Gastrocnemius medialis (tissue), 4 donors: ENCODE measurements at regions of chr6 and their contacts with region 1.

Region 1: GRCh38 chr6:31834434-31835198 is 7.1 kb downstream of the HSPA1B start:
- DNase-seq: peak; percentile 76 to 87
- ATAC-seq: peak; percentile 86 to 87
- H3K4me3 ChIP-seq: peak overlapping the region; percentile 68 to 96 (median 84)
- H3K27ac ChIP-seq: peak overlapping the region; percentile 87 to 97 (median 92)
- H3K4me1 ChIP-seq: peaks cover 40 to 47% of the 10 kb centered on the region in 2 donors
- H3K27me3 ChIP-seq: no peaks in the 10 kb centered on the region
- CTCF ChIP-seq: peak in 1 of 5 experiments; percentile 9
- POLR2A ChIP-seq: peak; percentile 73 to 74

Region 2: DNA sequence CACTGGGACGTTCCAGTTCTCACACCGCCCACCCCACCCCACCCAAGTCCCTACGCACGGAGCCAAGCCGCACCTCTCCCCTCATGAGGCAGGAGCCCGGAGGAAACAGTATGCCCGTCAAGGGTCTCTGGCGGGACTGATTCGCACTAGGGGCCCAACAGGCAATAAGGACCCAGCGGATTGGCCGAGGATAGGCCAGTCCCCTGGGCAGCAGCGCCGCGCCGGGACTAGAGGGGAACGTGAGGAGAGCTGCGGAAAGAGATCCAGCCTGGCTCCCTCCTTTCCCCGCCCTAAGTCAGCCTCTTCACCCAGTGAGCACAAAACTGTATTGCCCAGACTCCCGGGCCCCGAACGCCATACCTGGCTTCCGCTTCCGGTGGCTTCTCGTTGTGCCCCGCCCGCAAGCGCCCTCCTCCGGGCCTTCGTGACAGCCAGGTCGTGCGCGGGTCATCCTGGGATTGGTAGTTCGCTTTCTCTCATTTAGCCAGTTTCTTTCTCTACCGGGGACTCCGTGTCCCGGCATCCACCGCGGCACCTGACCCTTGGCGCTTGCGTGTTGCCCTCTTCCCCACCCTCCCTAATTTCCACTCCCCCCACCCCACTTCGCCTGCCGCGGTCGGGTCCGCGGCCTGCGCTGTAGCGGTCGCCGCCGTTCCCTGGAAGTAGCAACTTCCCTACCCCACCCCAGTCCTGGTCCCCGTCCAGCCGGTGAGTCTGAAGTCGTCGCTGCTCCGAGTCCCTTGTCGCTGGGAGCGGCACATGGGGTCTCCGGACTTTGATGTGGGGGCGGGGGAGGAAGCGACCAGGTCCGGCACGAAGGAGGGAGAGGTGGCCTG is 168.9 kb before region 1 on chr6 and contains the start of gene CSNK2B:
- in situ Hi-C with region 1: loop called in 1 of 4 experiments (anchors 10 kb)
- intact Hi-C with region 1: loop called (anchors 5 kb)
- DNase-seq: peak; percentile 99
- ATAC-seq: peak; percentile 86
- H3K4me3 ChIP-seq: peak within 1 kb of the TSS; percentile 83 to 98 (median 94)
- H3K27ac ChIP-seq: peak within 1 kb of the TSS; percentile 93 to 100 (median 97)
- H3K4me1 ChIP-seq: peaks cover 25 to 36% of the 10 kb centered on the region in 2 donors
- H3K27me3 ChIP-seq: no peaks in the 10 kb centered on the region
- CTCF ChIP-seq: peak in 1 of 5 experiments; percentile 19
- POLR2A ChIP-seq: peak; percentile 72
- total RNA-seq, gene CSNK2B: 185 to 251 (median 226) TPM

Region 3: GRCh38 chr6:31680840-31681671 is 153.6 kb before region 1 on chr6 and contains the start of gene LY6G5C:
- in situ Hi-C with region 1: loop called in 2 of 4 experiments (anchors 10 kb)
- intact Hi-C with region 1: loop called (anchors 1 kb)
- DNase-seq: peak; percentile 77 to 82
- ATAC-seq: peak; percentile 97
- H3K4me3 ChIP-seq: peak within 1 kb of the TSS; percentile 43 to 85 (median 66)
- H3K27ac ChIP-seq: peak within 1 kb of the TSS; percentile 22 to 74 (median 56)
- H3K4me1 ChIP-seq: peaks cover 13% of the 10 kb centered on the region in 2 donors
- H3K27me3 ChIP-seq: no peaks in the 10 kb centered on the region
- CTCF ChIP-seq: peak; percentile 60 to 80 (median 76)
- POLR2A ChIP-seq: no peak
- total RNA-seq, gene LY6G5C: 1.3 to 3.2 TPM in 2 of 4 donors, not detected in the others

Region 4: GRCh38 chr6:31729515-31729978 is 105.1 kb before region 1 on chr6:
- in situ Hi-C with region 1: no loop called
- intact Hi-C with region 1: loop called (anchors 2 kb)
- DNase-seq: peak; percentile 71 to 84
- ATAC-seq: peak; percentile 75 to 83
- H3K4me3 ChIP-seq: peak overlapping the region; percentile 62 to 95 (median 85)
- H3K27ac ChIP-seq: peak overlapping the region; percentile 78 to 92 (median 88)
- H3K4me1 ChIP-seq: peaks cover 9 to 11% of the 10 kb centered on the region in 2 donors
- H3K27me3 ChIP-seq: peaks cover 0 to 3% (median 0%) of the 10 kb centered on the region in 3 donors
- CTCF ChIP-seq: peak in 4 of 5 experiments; percentile 20 to 64 (median 42)
- POLR2A ChIP-seq: peak in 1 of 2 donors; percentile 16

Region 5: DNA sequence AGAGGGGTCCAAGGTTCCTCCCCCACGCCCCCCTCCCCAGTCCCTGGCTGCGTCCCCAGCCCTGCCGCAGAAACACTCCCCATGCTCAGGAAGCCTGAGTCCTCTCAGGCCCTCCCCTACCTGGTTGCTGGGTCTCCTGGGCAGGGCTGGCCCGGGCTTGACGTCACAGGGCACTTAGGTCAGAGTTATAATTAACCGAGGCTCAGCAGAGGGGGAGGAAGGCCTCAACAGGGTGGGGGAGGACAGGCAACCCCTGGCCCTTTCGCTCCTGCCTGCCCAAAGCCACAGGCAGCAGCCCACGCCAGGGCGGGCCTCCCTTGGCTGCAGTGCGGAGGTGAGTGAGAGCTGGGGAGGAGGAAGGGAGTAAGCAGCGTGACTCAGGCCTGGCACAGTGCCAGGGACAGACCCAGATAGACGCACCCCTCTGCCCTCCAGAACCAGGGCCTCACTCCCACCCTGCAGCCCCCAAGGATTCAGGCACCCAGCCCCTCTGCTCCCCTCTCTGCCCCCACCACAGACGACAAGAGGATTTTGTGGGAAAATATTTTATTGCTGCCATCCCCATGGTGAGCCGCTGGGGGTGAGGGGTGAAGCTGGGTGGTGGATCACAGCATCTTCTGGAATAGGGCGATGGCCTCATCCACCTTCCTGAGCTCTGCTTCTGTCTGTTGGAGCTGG is 57.5 kb before region 1 on chr6 and contains the start of gene VWA7:
- in situ Hi-C with region 1: loop called in 2 of 4 experiments (anchors 10 kb)
- intact Hi-C with region 1: loop called (anchors 1 kb)
- DNase-seq: peak; percentile 45 to 89
- ATAC-seq: peak; percentile 70 to 89
- H3K4me3 ChIP-seq: peak within 1 kb of the TSS; percentile 26 to 44 (median 37)
- H3K27ac ChIP-seq: peak within 1 kb of the TSS; percentile 83 to 88 (median 86)
- H3K4me1 ChIP-seq: peaks cover 11 to 17% of the 10 kb centered on the region in 2 donors
- H3K27me3 ChIP-seq: no peaks in the 10 kb centered on the region
- CTCF ChIP-seq: no peak
- POLR2A ChIP-seq: peak in 1 of 2 donors; percentile 31
- total RNA-seq, gene VWA7: 2.0 to 7.8 (median 4.7) TPM

Region 6: GRCh38 chr6:31901953-31902643 is 67.5 kb after region 1 on chr6 and contains the start of gene ZBTB12:
- in situ Hi-C with region 1: no loop called
- intact Hi-C with region 1: loop called (anchors 2 kb)
- DNase-seq: peak; percentile 78 to 82
- ATAC-seq: peak; percentile 58 to 65
- H3K4me3 ChIP-seq: peak within 1 kb of the TSS; percentile 56 to 93 (median 80)
- H3K27ac ChIP-seq: peak within 1 kb of the TSS; percentile 78 to 89 (median 86)
- H3K4me1 ChIP-seq: peaks cover 15 to 19% of the 10 kb centered on the region in 2 donors
- H3K27me3 ChIP-seq: no peaks in the 10 kb centered on the region
- CTCF ChIP-seq: peak in 1 of 5 experiments; percentile 20
- POLR2A ChIP-seq: peak; percentile 22 to 33
- total RNA-seq, gene ZBTB12: 0.26 TPM in 1 of 4 donors, not detected in the others